Right lobe of liver (tissue), 6 donors: ENCODE measurements at regions of chr3 and their contacts with region 1.

Region 1: DNA sequence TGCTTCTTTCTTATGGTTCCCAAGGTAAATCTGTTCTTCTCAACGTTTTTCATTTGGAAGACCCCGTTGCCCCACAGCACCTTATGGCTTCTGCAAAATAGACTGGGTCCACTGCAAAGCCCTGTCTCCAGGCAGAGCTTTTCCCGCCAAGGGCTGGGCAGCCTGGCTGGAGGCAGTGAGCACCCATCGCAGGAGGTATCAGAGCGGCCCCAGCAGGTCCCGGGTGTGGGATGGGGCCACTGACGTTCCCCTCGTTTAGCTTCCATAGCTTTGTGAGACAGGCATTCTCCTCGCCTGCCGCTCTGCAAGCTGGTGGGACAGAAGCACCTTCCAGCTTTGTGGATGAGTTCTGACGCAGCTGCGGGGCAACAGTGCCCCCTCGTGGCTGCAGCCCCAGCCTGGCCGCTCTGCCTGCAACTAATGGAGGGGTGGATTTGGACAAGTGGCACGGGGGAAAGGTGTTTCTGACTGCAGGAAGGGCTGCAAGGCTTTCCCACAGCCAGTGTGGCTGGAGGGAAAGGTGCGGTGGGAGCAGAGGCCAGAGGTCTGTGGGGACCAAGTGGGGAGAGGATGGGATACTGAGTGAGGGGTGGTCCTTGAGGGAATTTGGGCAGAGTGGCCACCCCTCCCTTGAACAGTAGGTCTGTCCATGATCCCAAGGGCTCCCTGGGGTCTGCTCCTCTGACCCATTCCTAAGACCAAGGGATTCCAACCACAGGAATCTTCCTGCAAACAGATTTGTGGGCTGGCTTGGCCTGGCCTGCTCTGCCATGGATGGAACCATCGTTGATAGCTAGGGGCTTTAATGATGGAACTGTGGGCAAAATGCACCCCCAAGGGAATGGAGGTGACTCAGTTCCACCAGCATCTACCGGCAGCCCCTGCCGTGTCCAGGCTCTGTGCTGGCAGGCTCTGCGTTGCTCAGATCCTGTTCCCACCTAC is 99.4 kb downstream of the FBLN2 start:
- DNase-seq: peak; percentile 77 to 83 (median 81)
- ATAC-seq: peak; percentile 82 to 86 (median 83)
- H3K4me3 ChIP-seq: no peak overlapping the region
- H3K27ac ChIP-seq: no peak overlapping the region
- H3K4me1 ChIP-seq: peaks cover 0 to 5% (median 0%) of the 10 kb centered on the region in 4 donors
- H3K27me3 ChIP-seq: peaks cover 0 to 5% of the 10 kb centered on the region in 2 donors
- CTCF ChIP-seq: peak; percentile 93 to 98 (median 97)
- POLR2A ChIP-seq: no peak

Region 2: DNA sequence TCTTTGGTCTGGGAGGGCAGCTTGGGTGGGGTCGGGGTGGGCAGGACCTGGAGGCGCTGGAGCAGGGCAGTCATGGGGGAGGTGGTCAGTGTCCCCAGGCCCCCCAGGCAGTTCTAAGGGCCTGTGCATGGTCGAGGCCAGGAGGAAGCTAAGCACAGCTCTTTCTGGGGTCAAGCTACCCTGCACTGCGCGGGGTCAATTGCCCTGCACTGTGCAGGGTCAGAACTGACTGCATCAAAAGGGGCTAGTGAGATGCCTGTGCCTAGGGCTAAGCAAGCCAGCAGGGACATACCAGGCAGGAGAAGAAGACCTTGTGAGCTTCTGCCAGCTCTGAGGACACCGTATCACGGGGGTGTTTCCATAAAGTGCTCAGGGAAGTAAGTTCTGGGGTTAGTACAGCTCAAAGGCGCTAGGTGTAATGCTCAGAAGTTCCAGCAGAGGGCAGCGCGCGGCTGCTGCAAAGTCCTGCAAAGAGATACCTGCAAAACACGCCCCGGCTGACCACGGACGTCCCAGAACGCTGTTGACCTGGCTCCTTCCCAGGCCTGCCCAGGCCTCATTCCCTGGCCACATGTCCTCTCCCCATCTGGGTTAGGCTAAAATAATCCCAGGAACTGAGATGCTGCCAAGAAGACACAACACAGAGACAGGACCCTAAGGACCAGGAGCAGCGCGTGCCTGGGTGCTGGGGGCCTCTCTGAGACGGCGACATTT is 556.3 kb before region 1 on chr3:
- intact Hi-C with region 1: loop called (anchors 10 kb)
- DNase-seq: peak; percentile 88 to 93 (median 93)
- ATAC-seq: peak; percentile 92 to 96 (median 96)
- H3K4me3 ChIP-seq: no peak overlapping the region
- H3K27ac ChIP-seq: no peak overlapping the region
- H3K4me1 ChIP-seq: peaks cover 0 to 12% (median 0%) of the 10 kb centered on the region in 4 donors
- H3K27me3 ChIP-seq: no peaks in the 10 kb centered on the region
- CTCF ChIP-seq: peak; percentile 92 to 97 (median 94)
- POLR2A ChIP-seq: no peak

Region 3: DNA sequence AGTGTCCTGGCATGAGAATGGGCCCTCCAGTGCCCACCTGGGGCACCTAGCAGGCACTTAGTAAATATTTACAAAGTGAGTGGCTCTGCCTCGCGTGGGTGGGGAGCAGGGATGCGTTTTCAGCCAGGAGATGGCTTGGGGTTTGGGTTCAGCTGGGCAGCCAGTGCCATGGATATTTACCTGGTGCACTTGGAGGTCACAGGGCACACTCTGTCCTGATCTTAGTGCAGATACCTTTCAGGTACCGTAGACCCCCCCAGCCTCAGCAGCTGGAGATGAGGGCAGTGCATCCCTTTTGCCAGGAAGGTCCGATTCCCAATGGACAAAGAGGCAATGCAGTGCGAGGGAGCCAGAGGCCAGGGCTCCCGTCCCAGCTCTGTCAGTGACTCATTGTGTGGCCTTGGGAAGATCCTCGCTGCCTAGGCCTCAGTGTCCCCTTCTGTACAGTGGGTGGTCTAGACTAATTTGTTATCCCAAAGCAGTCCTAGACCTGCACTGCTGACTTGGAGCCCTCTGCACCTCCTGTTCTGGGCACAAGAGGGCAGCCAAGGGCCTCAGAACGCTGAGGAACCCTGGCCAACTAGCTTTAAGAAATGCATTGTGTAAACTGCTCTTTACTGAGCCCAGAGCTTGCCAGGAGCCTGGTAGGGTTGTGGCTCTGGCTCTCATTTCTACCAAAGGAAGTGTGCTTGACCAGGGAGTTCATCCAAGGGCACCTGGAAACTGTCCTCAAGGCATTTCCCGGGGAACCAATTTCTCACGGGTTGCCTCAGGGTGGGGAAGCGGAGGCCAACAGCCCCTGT is 152.2 kb before region 1 on chr3:
- intact Hi-C with region 1: loop called (anchors 5 kb)
- DNase-seq: peak; percentile 64 to 80 (median 79)
- ATAC-seq: peak; percentile 92 to 97 (median 96)
- H3K4me3 ChIP-seq: no peak overlapping the region
- H3K27ac ChIP-seq: no peak overlapping the region
- H3K4me1 ChIP-seq: peaks cover 0 to 4% (median 0%) of the 10 kb centered on the region in 4 donors
- H3K27me3 ChIP-seq: no peaks in the 10 kb centered on the region
- CTCF ChIP-seq: peak; percentile 91 to 95 (median 94)
- POLR2A ChIP-seq: no peak

Region 4: DNA sequence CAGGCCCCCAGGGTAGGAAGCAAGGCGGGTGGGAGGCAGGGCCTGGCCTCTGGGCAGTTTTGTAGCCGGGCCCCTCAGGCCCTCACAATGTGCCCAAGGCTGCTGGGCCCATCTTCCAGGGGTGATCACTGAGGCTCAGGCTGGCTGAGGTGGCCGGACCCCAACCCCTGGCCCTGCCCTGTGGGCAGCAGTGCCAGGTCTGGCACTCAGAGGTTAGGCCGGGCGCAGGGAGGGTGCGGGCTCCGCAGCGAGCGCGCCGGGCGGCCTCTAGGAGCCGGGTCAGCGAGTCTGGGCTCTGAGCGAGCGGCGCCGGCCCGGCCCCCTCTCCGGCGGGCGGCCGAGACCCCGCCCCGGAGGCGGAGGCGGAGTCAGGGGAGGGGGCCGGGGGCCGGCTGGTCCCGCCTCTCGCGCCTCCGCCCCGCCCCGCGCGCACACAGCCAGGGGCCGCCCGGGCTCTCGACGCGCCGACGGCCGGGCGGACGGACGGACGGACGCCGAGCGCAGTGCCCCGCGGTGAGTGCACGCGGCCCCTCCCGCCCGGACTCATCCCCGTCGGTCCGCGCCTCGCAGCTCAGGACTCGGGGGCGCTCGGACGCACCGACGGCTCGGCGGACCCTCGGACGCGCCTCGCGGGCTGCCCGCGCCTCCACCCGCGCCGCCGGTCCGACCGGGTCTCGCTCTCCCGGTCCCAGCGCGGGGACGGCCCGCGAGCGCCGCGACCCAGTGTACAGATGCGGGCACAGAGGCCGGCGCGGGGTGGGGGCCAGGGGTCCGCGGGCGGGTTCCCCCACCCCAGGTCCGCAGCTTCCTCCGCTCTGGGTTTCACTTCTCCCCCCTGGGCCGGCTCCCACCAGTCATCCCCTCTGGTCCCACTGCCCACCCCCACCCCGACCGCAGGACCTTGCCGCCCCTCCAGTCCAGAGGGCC is 99.4 kb before region 1 on chr3 and contains the start of gene FBLN2:
- intact Hi-C with region 1: no loop called
- DNase-seq: no peak
- ATAC-seq: peak; percentile 38 to 70 (median 46)
- H3K4me3 ChIP-seq: no peak within 1 kb of the TSS
- H3K27ac ChIP-seq: no peak within 1 kb of the TSS
- H3K4me1 ChIP-seq: no peaks in the 10 kb centered on the region
- H3K27me3 ChIP-seq: peaks cover 0 to 19% of the 10 kb centered on the region in 2 donors
- CTCF ChIP-seq: no peak
- POLR2A ChIP-seq: no peak
- total RNA-seq, gene FBLN2: 1.9 to 4.0 (median 2.7) TPM

Region 5: GRCh38 chr3:13884851-13885703 is 236.7 kb after region 1 on chr3:
- intact Hi-C with region 1: loop called in 1 of 2 experiments (anchors 10 kb)
- DNase-seq: peak in 1 of 3 donors; percentile 58
- ATAC-seq: peak; percentile 65 to 81 (median 78)
- H3K4me3 ChIP-seq: no peak overlapping the region
- H3K27ac ChIP-seq: no peak overlapping the region
- H3K4me1 ChIP-seq: no peaks in the 10 kb centered on the region
- H3K27me3 ChIP-seq: peaks cover 10 to 13% of the 10 kb centered on the region in 2 donors
- CTCF ChIP-seq: peak; percentile 52 to 87 (median 64)
- POLR2A ChIP-seq: no peak